GM10248 (cell line): ENCODE measurements at regions of chr13 and their contacts with region 1.

Region 1: GRCh38 chr13:32246468-32246867 is 68.7 kb downstream of the ZAR1L start:
- DNase-seq: peak; percentile 71
- CTCF ChIP-seq: peak; percentile 70

Region 2: GRCh38 chr13:31214435-31214834 is 1032.0 kb before region 1 on chr13:
- CTCF ChIA-PET with region 1: no interaction called
- POLR2A ChIA-PET with region 1: no interaction called
- DNase-seq: no peak
- CTCF ChIP-seq: no peak

Region 3: GRCh38 chr13:31797154-31797775 is 449.2 kb before region 1 on chr13:
- CTCF ChIA-PET with region 1: no interaction called
- POLR2A ChIA-PET with region 1: no interaction called
- DNase-seq: no peak
- CTCF ChIP-seq: no peak

Region 4: GRCh38 chr13:32031025-32031814 is 215.2 kb before region 1 on chr13 and contains the start of gene FRY:
- CTCF ChIA-PET with region 1: no interaction called
- POLR2A ChIA-PET with region 1: no interaction called
- DNase-seq: peak; percentile 75
- CTCF ChIP-seq: no peak

Region 5: GRCh38 chr13:32214071-32214470 is 32.4 kb before region 1 on chr13:
- CTCF ChIA-PET with region 1: interaction called, 13 read pairs
- POLR2A ChIA-PET with region 1: no interaction called
- DNase-seq: no peak
- CTCF ChIP-seq: no peak

Region 6: GRCh38 chr13:32225481-32225931 is 21.0 kb before region 1 on chr13:
- CTCF ChIA-PET with region 1: interaction called, 12 read pairs
- POLR2A ChIA-PET with region 1: no interaction called
- DNase-seq: no peak
- CTCF ChIP-seq: no peak

Region 7: GRCh38 chr13:32234932-32235331 is 11.5 kb before region 1 on chr13:
- CTCF ChIA-PET with region 1: interaction called, 64 read pairs
- POLR2A ChIA-PET with region 1: no interaction called
- DNase-seq: no peak
- CTCF ChIP-seq: no peak

Region 8: GRCh38 chr13:32261567-32261966 is 15.1 kb after region 1 on chr13:
- CTCF ChIA-PET with region 1: interaction called, 33 read pairs
- POLR2A ChIA-PET with region 1: no interaction called
- DNase-seq: no peak
- CTCF ChIP-seq: no peak